Activated CD4-positive, alpha-beta memory T cell treated with anti-CD3 and anti-CD28 coated beads, Interleukin-2, amount 10 ng/mL, durations not matched to agents 7 days and 5 days (primary cell): ENCODE measurements at regions of chr2 and their contacts with region 1.

Region 1: DNA sequence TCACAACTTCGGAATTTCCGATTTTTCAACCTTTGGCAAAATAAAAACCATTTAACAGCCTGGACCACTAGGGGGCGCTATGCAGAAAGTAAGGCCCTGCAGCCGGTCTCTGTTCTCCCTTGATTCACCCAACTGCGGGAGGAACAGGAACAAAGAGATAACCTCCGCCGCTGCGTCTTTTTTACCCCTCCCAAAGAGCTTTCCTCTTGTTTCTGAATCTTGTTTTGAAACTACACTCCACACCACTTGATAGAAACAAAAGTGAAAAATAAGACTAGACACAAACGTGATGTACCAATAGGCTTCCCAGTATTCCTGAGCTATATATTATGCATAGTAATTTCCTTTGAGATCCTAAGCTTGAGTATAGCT is 231.2 kb downstream of the MYO3B start:
- DNase-seq: peak; percentile 75
- H3K4me3 Mint-ChIP-seq: peak overlapping the region; percentile 28
- H3K27ac Mint-ChIP-seq: no peak overlapping the region
- H3K4me1 Mint-ChIP-seq: peaks cover 7% of the 10 kb centered on the region
- H3K27me3 Mint-ChIP-seq: peaks cover 21% of the 10 kb centered on the region

Region 2: GRCh38 chr2:170380267-170380666 is 28.9 kb before region 1 on chr2:
- CTCF ChIA-PET with region 1: interaction called, 10 read pairs
- POLR2A ChIA-PET with region 1: no interaction called
- DNase-seq: no peak
- H3K4me3 Mint-ChIP-seq: no peak overlapping the region
- H3K27ac Mint-ChIP-seq: no peak overlapping the region
- H3K4me1 Mint-ChIP-seq: no peaks in the 10 kb centered on the region
- H3K27me3 Mint-ChIP-seq: peaks cover 21% of the 10 kb centered on the region

Region 3: GRCh38 chr2:170391697-170392096 is 17.5 kb before region 1 on chr2:
- CTCF ChIA-PET with region 1: interaction called, 13 read pairs
- POLR2A ChIA-PET with region 1: no interaction called
- DNase-seq: no peak
- H3K4me3 Mint-ChIP-seq: no peak overlapping the region
- H3K27ac Mint-ChIP-seq: no peak overlapping the region
- H3K4me1 Mint-ChIP-seq: no peaks in the 10 kb centered on the region
- H3K27me3 Mint-ChIP-seq: peaks cover 25% of the 10 kb centered on the region

Region 4: DNA sequence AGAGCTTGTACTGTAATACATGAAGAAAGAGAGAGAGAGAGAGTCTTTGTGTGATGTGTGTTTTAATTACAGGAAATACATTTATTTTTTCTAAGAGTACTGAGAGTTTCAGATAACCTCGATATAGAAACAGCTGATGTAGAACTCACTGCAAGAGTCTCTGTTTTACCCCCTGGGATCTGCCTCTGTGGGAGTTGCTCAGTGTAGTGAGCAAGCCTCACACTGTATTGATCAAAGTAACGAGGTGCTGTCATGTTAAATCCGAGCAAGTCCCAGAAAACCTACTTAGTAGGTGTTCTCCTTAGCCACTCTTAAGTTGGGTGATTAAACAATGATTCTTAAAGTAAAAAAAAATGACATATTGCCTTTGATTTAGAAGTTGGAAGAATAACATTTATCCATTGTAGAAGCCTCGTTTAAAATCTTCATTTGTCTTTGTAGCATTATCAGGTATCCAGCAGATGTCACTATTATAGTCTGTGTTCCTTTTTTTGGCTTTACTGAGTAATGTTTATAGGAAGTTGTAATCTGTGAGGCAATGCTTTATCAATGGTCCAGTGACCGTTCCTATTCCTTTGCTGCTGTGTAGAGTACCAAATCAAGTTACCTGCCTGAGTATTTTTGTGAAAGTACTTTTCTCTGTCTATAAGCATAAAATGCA is 12.2 kb before region 1 on chr2:
- CTCF ChIA-PET with region 1: interaction called, 13 read pairs
- POLR2A ChIA-PET with region 1: no interaction called
- DNase-seq: no peak
- H3K4me3 Mint-ChIP-seq: no peak overlapping the region
- H3K27ac Mint-ChIP-seq: no peak overlapping the region
- H3K4me1 Mint-ChIP-seq: no peaks in the 10 kb centered on the region
- H3K27me3 Mint-ChIP-seq: peaks cover 24% of the 10 kb centered on the region

Region 5: DNA sequence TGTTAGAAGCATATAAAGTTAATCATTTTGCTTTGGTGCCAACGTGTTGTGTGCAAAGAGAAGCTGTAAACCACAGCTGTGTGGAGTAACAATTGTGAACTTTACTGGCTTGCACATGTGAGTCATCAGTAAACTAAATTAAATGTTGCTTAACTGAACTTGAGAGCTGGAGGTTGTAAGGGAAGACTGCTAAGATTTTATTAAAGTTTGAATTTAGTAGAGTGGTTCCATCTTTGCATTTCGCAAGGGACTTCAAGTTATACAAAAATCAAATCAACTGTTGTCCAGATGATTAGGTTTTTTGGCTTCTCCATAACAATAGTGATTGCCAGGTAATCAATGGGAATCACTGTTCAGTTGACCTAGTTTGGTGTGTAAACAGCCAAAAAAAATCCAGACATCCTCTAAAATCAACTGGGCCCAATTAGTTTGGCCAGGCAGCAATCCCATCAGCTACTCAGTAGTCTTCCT is 16.2 kb after region 1 on chr2:
- CTCF ChIA-PET with region 1: interaction called, 30 read pairs
- POLR2A ChIA-PET with region 1: no interaction called
- DNase-seq: no peak
- H3K4me3 Mint-ChIP-seq: no peak overlapping the region
- H3K27ac Mint-ChIP-seq: no peak overlapping the region
- H3K4me1 Mint-ChIP-seq: no peaks in the 10 kb centered on the region
- H3K27me3 Mint-ChIP-seq: peaks cover 4% of the 10 kb centered on the region

Region 6: GRCh38 chr2:170505631-170506275 is 96.6 kb after region 1 on chr2:
- CTCF ChIA-PET with region 1: interaction called, 12 read pairs
- POLR2A ChIA-PET with region 1: no interaction called
- DNase-seq: no peak
- H3K4me3 Mint-ChIP-seq: no peak overlapping the region
- H3K27ac Mint-ChIP-seq: peak overlapping the region; percentile 47
- H3K4me1 Mint-ChIP-seq: peaks cover 56% of the 10 kb centered on the region
- H3K27me3 Mint-ChIP-seq: peaks cover 8% of the 10 kb centered on the region

Region 7: DNA sequence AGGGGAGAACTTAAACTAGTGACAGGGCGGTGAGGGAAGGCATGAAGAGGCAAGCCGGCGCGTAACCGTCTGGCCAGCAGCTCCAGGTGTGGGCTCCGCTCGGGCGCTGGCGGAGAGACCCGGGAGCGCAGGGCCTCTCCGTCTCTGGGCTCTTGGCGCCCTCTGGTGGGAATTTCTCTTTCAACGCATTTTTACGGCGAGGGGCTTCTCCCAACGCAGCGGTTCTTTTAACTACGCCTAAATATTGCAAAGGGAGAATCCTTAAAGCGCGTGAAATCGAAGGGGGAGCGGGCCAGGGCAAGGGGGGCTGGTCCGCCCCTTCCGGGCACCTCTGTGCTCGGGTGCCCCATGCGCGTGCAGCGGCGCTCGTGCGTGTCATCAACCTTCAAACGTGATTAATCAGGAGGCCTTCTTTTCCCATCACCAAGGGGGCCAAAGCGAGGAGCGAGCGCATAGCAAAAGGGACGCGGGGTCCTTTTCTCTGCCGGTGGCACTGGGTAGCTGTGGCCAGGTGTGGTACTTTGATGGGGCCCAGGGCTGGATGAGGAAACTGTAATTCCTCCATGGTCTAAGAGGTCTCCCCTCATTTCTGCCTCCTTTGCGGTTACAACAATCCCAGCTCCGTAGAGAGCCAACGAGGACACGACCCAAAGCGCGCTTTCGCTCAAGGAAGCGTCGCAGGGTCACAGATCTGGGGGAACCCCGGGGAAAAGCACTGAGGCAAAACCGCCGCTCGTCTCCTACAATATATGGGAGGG is 406.8 kb after region 1 on chr2:
- CTCF ChIA-PET with region 1: interaction called, 35 read pairs
- POLR2A ChIA-PET with region 1: interaction called, 3 read pairs
- DNase-seq: peak; percentile 65
- H3K4me3 Mint-ChIP-seq: peak overlapping the region; percentile 65
- H3K27ac Mint-ChIP-seq: peak overlapping the region; percentile 22
- H3K4me1 Mint-ChIP-seq: peaks cover 48% of the 10 kb centered on the region
- H3K27me3 Mint-ChIP-seq: peaks cover 85% of the 10 kb centered on the region